Activated CD8-positive, alpha-beta T cell treated with anti-CD3 and anti-CD28 coated beads for 36 hours (primary cell): ENCODE measurements at regions of chr2 and their contacts with region 1.

Region 1: GRCh38 chr2:74334931-74335333 is 8.3 kb downstream of the SLC4A5 start:
- DNase-seq: peak; percentile 80
- ATAC-seq: peak; percentile 90
- H3K4me3 Mint-ChIP-seq: no peak overlapping the region
- H3K27ac Mint-ChIP-seq: no peak overlapping the region
- H3K4me1 Mint-ChIP-seq: no peaks in the 10 kb centered on the region
- H3K27me3 Mint-ChIP-seq: no peaks in the 10 kb centered on the region
- CTCF ChIP-seq: peak; percentile 96

Region 2: DNA sequence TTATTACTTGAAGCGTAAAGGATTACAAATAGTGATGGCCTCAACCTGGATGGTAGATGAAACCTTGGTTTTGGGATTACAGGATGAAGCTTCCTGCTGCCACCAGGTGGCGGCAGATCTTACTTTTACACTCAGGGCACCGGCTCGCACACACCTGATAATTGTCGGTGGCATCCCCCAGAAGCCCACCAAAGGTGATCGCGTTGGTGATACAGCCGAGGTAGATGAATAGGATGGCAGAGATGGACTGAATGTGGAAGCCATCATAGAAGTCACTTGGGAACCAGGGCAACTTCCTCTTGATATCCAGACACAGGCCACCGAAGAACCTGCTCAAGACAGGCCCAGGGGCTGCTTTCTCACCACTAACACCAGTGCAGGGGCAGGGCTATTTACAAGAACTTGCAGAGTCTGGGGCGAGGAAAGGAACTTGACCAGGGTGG is 84.7 kb before region 1 on chr2:
- CTCF ChIA-PET with region 1: interaction called, 190 read pairs
- POLR2A ChIA-PET with region 1: interaction called, 3 read pairs
- intact Hi-C with region 1: loop called (anchors 1 kb)
- DNase-seq: peak; percentile 65
- ATAC-seq: peak; percentile 78
- H3K4me3 Mint-ChIP-seq: no peak overlapping the region
- H3K27ac Mint-ChIP-seq: no peak overlapping the region
- H3K4me1 Mint-ChIP-seq: no peaks in the 10 kb centered on the region
- H3K27me3 Mint-ChIP-seq: no peaks in the 10 kb centered on the region
- CTCF ChIP-seq: peak; percentile 89

Region 3: DNA sequence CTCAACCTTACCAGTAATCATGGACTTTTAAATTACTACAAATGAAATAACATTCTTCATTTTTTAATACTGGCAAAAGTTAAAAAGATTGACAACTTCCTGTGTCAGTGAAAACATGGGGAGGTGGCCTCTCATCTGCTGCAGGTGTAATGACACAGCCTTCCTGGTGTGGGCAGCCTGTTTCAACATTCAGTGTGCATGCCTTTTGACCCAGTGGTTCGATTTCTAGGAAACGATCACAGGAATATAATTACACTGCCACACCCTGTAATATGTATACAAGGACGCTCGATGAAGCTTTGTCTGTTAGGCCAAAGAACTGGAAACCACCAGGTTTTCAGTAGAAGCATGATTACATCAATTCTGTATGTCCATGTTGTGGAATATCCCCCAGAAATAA is 67.9 kb before region 1 on chr2:
- CTCF ChIA-PET with region 1: interaction called, 114 read pairs
- POLR2A ChIA-PET with region 1: no interaction called
- intact Hi-C with region 1: loop called (anchors 1 kb)
- DNase-seq: peak; percentile 83
- ATAC-seq: peak; percentile 99
- H3K4me3 Mint-ChIP-seq: no peak overlapping the region
- H3K27ac Mint-ChIP-seq: peak overlapping the region; percentile 80
- H3K4me1 Mint-ChIP-seq: peaks cover 12% of the 10 kb centered on the region
- H3K27me3 Mint-ChIP-seq: no peaks in the 10 kb centered on the region
- CTCF ChIP-seq: peak; percentile 64

Region 4: GRCh38 chr2:74317701-74318301 is 17.1 kb before region 1 on chr2:
- CTCF ChIA-PET with region 1: interaction called, 103 read pairs
- POLR2A ChIA-PET with region 1: no interaction called
- intact Hi-C with region 1: no loop called
- DNase-seq: no peak
- ATAC-seq: no peak
- H3K4me3 Mint-ChIP-seq: no peak overlapping the region
- H3K27ac Mint-ChIP-seq: no peak overlapping the region
- H3K4me1 Mint-ChIP-seq: no peaks in the 10 kb centered on the region
- H3K27me3 Mint-ChIP-seq: no peaks in the 10 kb centered on the region
- CTCF ChIP-seq: no peak

Region 5: GRCh38 chr2:74364533-74365505 is 29.9 kb after region 1 on chr2:
- CTCF ChIA-PET with region 1: interaction called, 16 read pairs
- POLR2A ChIA-PET with region 1: no interaction called
- intact Hi-C with region 1: no loop called
- DNase-seq: no peak
- ATAC-seq: no peak
- H3K4me3 Mint-ChIP-seq: no peak overlapping the region
- H3K27ac Mint-ChIP-seq: no peak overlapping the region
- H3K4me1 Mint-ChIP-seq: no peaks in the 10 kb centered on the region
- H3K27me3 Mint-ChIP-seq: no peaks in the 10 kb centered on the region
- CTCF ChIP-seq: no peak

Region 6: GRCh38 chr2:74391580-74392448 is 56.9 kb after region 1 on chr2:
- CTCF ChIA-PET with region 1: interaction called, 22 read pairs
- POLR2A ChIA-PET with region 1: no interaction called
- intact Hi-C with region 1: no loop called
- DNase-seq: peak; percentile 95
- ATAC-seq: peak; percentile 92
- H3K4me3 Mint-ChIP-seq: peak overlapping the region; percentile 86
- H3K27ac Mint-ChIP-seq: peak overlapping the region; percentile 99
- H3K4me1 Mint-ChIP-seq: peaks cover 2% of the 10 kb centered on the region
- H3K27me3 Mint-ChIP-seq: no peaks in the 10 kb centered on the region
- CTCF ChIP-seq: peak; percentile 96

Region 7: DNA sequence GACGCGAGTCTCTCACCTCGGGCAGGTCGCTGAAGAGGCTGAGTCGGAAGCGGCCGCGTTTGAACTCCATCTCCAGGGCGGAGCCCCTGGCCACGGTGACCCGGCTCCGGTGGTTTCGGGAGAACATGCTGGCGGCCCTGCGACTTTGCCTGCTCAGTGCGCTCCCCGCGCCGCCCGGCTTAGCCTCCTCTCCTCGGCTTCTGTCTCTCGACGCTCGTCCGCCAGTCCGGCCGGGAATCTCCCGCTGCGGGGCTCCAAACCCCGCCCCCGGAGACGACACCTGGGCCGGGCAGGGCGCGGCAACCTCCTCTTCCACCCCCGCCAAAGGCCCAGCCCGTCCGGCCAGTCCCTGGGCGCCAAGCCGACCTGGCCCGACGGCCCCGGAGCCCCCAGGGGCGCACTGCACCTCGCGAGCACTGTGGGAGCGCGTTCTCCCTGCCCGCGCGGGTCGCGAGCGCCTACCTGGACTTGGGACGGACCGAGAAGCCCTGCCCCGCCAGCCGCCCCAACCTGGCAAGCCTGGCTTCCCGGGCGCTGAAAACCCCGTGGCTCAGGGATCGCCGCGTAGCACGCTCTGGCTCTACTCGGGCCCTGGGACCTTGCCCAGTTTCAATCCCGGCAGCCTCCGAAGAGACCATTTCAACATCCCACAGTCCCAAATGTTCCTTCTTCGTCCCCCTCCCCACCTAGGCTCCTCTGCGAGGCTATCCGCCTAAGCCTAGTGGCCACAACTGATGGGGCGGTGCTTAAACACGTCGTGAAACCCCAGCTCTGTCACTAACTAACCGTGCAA is 107.0 kb after region 1 on chr2 and contains the start of gene RTKN:
- CTCF ChIA-PET with region 1: no interaction called
- POLR2A ChIA-PET with region 1: no interaction called
- intact Hi-C with region 1: no loop called
- DNase-seq: peak; percentile 59
- ATAC-seq: peak; percentile 12
- H3K4me3 Mint-ChIP-seq: peak within 1 kb of the TSS; percentile 47
- H3K27ac Mint-ChIP-seq: no peak within 1 kb of the TSS
- H3K4me1 Mint-ChIP-seq: peaks cover 9% of the 10 kb centered on the region
- H3K27me3 Mint-ChIP-seq: peaks cover 28% of the 10 kb centered on the region
- CTCF ChIP-seq: no peak
- total RNA-seq, gene RTKN: 1.2 to 1.6 TPM